ENCODE measurements at regions of chr5 and their contacts with region 1.

Region 1: GRCh38 chr5:140145818-140146522 is 20.2 kb downstream of the IGIP start:
- DNase-seq: no peak
- ATAC-seq: peak; percentile 83
- H3K4me3 ChIP-seq: peak overlapping the region; percentile 11 to 35; a peak in 3 of 4 replicates
- H3K27ac ChIP-seq: no peak overlapping the region
- H3K4me1 ChIP-seq: peaks cover 4 to 19% of the 10 kb centered on the region in 2 experiments; a peak in 3 of 4 replicates
- H3K27me3 ChIP-seq: no peaks in the 10 kb centered on the region
- CTCF ChIP-seq: peak; percentile 35 to 63 (median 59); a peak in 5 of 6 replicates
- POLR2A ChIP-seq: no peak
- RAD21 ChIP-seq: peak; percentile 35

Region 2: GRCh38 chr5:140042643-140043500 is 103.1 kb before region 1 on chr5 and contains the start of gene NRG2:
- CTCF ChIA-PET with region 1: no interaction called
- POLR2A ChIA-PET with region 1: no interaction called
- RAD21 ChIA-PET with region 1: no interaction called
- intact Hi-C with region 1: no loop called
- DNase-seq: peak; percentile 24
- ATAC-seq: peak; percentile 89
- H3K4me3 ChIP-seq: peak within 1 kb of the TSS; percentile 48 to 60
- H3K27ac ChIP-seq: peak within 1 kb of the TSS; percentile 28; the same call in 1 of the 2 replicates
- H3K4me1 ChIP-seq: peaks cover 3 to 27% of the 10 kb centered on the region in 2 experiments; a peak in 3 of 4 replicates
- H3K27me3 ChIP-seq: no peaks in the 10 kb centered on the region
- CTCF ChIP-seq: peak; percentile 44 to 53 (median 45); a peak in 4 of 6 replicates
- POLR2A ChIP-seq: no peak
- RAD21 ChIP-seq: no peak
- total RNA-seq, gene NRG2: 0.91 TPM

Region 3: GRCh38 chr5:140073296-140073695 is 72.7 kb before region 1 on chr5:
- CTCF ChIA-PET with region 1: interaction called, 39 read pairs
- POLR2A ChIA-PET with region 1: no interaction called
- RAD21 ChIA-PET with region 1: interaction called in 1 of 2 experiments, 4 read pairs
- intact Hi-C with region 1: loop called (anchors 1 kb)
- DNase-seq: no peak
- ATAC-seq: no peak
- H3K4me3 ChIP-seq: no peak overlapping the region
- H3K27ac ChIP-seq: no peak overlapping the region
- H3K4me1 ChIP-seq: 0 out of 4 replicates have a peak, but pooled peaks cover 0 to 4% of the 10 kb centered on the region in 2 experiments
- H3K27me3 ChIP-seq: no peaks in the 10 kb centered on the region
- CTCF ChIP-seq: peak; percentile 36 to 79 (median 68)
- POLR2A ChIP-seq: no peak
- RAD21 ChIP-seq: peak; percentile 78

Region 4: DNA sequence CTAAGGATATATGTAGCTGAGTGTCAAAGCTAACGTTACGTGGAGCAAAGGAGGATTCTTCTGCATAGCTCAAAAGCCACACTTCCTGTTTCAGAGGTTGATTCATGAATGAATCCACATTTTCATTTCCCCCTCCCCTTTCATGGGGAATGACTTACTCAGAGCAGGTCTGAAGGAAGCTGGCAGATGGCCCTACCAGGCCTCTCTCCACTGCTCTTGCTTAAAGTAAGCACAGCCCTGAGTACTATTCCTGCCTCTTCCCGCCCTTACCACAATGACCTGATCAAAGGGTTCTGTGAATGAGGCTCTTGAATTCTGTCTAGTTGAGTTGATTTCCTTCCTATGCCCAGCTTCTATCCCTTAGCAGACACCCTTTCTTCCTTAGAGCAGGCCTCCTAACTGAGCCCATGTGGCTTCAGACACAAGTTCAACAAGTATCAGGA is 14.0 kb before region 1 on chr5:
- CTCF ChIA-PET with region 1: interaction called, 20 read pairs
- POLR2A ChIA-PET with region 1: no interaction called
- RAD21 ChIA-PET with region 1: no interaction called
- intact Hi-C with region 1: no loop called
- DNase-seq: peak; percentile 33
- ATAC-seq: peak; percentile 79
- H3K4me3 ChIP-seq: no peak overlapping the region
- H3K27ac ChIP-seq: no peak overlapping the region
- H3K4me1 ChIP-seq: peaks cover 0 to 19% of the 10 kb centered on the region in 2 experiments; a peak in 2 of 4 replicates
- H3K27me3 ChIP-seq: no peaks in the 10 kb centered on the region
- CTCF ChIP-seq: no peak
- POLR2A ChIP-seq: no peak
- RAD21 ChIP-seq: no peak